ENCODE measurements at regions of chr3 and their contacts with region 1.

Region 1: GRCh38 chr3:157136647-157137387 is 23.1 kb downstream of the CCNL1 start:
- DNase-seq: peak; percentile 82
- ATAC-seq: peak; percentile 82
- H3K4me3 ChIP-seq: peak overlapping the region; percentile 3 to 43 (median 43); a peak in 2 of 6 replicates
- H3K27ac ChIP-seq: peak overlapping the region; percentile 89
- H3K4me1 ChIP-seq: peaks cover 56% of the 10 kb centered on the region
- H3K27me3 ChIP-seq: no peaks in the 10 kb centered on the region
- CTCF ChIP-seq: peak; percentile 44
- EP300 ChIP-seq: peak in 1 of 2 experiments; percentile 82; a peak in 2 of 4 replicates
- POLR2A ChIP-seq: peak; percentile 64 to 66
- RAD21 ChIP-seq: no peak

Region 2: DNA sequence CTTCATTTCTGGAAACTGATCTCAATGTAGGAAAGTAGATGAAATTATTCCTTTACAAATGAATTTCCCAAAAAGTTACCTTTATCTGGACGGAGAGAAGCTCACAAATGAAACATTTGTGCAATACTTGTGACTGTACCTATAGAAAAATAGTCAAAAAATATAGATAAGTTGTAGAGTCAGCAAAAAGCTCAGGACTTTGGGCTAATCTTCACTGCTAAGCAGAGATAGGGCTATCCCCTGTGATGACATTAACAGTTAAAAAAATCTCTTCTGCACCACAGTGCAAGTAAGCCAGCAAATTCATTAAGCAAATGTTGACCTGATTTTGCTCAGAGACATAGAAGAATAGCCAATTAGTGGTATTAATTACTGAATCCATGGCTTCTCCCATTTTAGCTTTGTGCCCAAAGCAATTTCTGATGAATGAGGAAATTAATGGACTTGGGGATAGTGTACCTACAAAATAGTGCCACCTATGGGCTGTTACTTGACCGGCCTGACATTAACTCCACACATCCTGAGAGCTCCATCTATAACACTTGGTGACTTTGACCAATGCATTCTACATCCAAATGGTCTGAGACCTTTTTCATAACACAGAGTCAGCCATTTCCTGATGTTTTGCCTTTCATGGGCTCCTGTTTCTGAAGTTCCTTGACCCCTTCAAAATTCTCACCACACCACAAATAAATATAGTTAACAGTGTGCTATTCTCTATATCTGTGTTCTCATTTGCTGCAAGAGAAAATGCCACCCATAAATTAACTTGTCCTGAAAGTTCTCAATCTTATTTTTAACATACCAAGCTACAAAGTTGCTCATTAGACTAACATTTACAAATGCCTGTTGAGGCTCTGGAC is 686.9 kb before region 1 on chr3:
- CTCF ChIA-PET with region 1: no interaction called
- POLR2A ChIA-PET with region 1: no interaction called
- in situ Hi-C with region 1: no loop called
- intact Hi-C with region 1: loop called (anchors 5 kb)
- DNase-seq: peak; percentile 29
- ATAC-seq: peak; percentile 87
- H3K4me3 ChIP-seq: no peak overlapping the region
- H3K27ac ChIP-seq: no peak overlapping the region
- H3K4me1 ChIP-seq: no peaks in the 10 kb centered on the region
- H3K27me3 ChIP-seq: no peaks in the 10 kb centered on the region; a peak in 1 of 5 replicates
- CTCF ChIP-seq: peak; percentile 53
- EP300 ChIP-seq: no peak
- POLR2A ChIP-seq: no peak
- RAD21 ChIP-seq: no peak

Region 3: DNA sequence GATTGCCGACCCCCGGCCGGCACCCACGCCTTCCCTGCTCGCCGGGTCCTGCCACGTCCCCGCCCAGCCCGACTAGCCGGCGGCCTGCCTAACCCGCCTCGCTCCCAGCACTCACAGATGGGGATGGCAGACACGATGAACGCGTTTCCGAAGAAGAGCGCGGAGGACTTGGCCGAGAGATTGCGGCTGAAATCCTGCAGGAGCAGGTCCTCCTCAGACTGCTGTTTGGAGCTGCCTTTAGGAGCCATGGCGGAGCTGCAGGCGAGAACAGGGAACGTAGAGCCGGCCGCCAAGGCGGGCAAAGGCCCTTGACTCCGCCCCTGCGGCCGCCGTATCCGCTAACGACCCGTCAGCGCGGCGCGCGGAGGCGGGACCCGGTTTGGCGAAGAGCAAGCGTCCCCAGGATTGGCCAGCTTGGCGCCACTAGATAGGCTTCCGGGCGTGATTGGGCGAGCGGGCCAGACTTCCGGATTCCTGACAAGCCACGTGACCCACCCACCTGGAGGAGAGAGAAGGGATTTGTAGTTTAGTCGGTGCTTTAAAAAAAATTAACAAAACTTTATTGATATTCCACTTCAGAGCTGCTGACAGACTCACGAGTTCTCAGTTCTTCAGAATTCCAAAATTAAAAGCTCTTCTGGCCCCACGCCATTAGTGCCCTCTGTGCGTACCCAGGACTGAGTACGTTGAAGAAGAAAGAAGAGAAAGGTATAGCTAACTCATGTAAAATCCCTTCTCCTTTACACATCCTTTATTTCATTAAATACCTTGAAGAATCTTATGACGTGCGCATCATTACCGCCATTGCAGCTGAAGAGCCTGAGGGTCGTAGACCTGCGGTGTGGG is 581.8 kb before region 1 on chr3 and contains the start of gene SSR3:
- CTCF ChIA-PET with region 1: no interaction called
- POLR2A ChIA-PET with region 1: interaction called, 15 read pairs
- in situ Hi-C with region 1: no loop called
- intact Hi-C with region 1: loop called (anchors 1 kb)
- DNase-seq: peak; percentile 96
- ATAC-seq: peak; percentile 99
- H3K4me3 ChIP-seq: peak within 1 kb of the TSS; percentile 85 to 100 (median 91)
- H3K27ac ChIP-seq: peak within 1 kb of the TSS; percentile 94
- H3K4me1 ChIP-seq: peaks cover 38% of the 10 kb centered on the region
- H3K27me3 ChIP-seq: no peaks in the 10 kb centered on the region; a peak in 2 of 5 replicates
- CTCF ChIP-seq: no peak
- EP300 ChIP-seq: peak in 1 of 2 experiments; percentile 35; a peak in 2 of 4 replicates
- POLR2A ChIP-seq: peak; percentile 88 to 98
- RAD21 ChIP-seq: no peak; the same call in 1 of the 2 replicates
- total RNA-seq, gene SSR3: 268 and 325 TPM in 2 replicates

Region 4: DNA sequence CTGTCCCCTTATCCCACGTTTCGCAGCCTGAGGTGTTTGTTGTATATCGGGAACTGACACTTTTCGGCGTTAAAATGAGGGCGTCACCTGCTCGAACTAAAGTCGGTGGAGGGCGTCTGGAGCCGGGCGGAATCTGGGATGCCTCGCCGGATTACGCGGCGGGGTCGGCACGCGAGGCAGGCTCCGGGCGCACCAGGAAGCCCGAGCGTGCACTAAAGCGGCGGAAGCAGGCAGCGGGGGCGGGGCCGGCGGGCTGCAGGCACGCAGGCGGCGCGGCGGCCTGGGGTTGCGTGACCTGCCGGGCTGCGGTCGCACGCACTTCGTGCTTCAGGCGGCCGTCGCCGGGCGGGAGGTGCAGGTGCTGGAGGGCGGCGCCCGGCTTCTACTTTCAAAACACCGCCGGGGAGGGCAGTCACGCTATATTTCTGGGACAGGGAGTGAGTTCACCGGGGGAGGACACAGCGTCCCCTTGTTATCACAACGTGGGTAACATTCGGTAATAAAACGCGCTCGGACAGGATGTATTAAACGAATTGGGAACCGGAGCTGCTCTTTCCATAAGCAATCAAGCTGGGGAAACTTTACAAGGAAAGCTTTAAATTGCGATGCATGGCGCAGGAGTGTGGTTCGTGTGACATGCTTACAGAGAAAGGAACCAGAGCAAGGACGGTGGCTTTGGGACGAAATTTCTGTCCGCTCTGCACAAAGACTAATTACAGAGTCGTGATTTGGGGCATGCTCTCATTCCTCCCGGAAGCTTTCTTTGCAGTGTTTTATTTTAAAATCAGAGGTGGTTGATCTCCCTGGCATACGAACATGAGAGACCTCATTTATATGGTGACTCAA is 319.8 kb before region 1 on chr3:
- CTCF ChIA-PET with region 1: no interaction called
- POLR2A ChIA-PET with region 1: no interaction called
- in situ Hi-C with region 1: no loop called
- intact Hi-C with region 1: loop called (anchors 5 kb)
- DNase-seq: no peak
- ATAC-seq: peak; percentile 34
- H3K4me3 ChIP-seq: peak overlapping the region in 1 of 3 experiments; percentile 17; a peak in 1 of 6 replicates
- H3K27ac ChIP-seq: no peak overlapping the region
- H3K4me1 ChIP-seq: peaks cover 24% of the 10 kb centered on the region
- H3K27me3 ChIP-seq: no peaks in the 10 kb centered on the region
- CTCF ChIP-seq: no peak
- EP300 ChIP-seq: no peak
- POLR2A ChIP-seq: no peak
- RAD21 ChIP-seq: no peak

Region 5: DNA sequence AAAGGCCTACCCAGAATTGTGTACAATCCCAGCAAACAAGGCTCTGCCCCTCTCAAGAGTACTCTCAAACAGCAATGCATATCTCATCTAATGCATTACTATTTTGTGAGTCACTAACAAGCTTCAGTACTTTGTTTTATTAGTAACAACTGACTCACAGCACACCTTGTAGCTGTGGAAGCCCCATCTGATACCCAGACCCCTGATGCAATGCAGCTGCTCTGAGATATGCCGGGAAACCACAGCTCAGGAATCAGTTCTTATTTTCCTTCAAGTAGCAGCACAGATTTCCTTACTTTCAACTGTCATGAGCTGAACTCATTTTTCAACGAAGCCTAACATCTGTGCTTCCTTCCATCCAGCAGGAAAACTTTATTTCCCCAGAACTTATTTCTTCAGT is 14.7 kb before region 1 on chr3:
- CTCF ChIA-PET with region 1: no interaction called
- POLR2A ChIA-PET with region 1: interaction called, 53 read pairs
- in situ Hi-C with region 1: no loop called
- intact Hi-C with region 1: no loop called
- DNase-seq: peak; percentile 43
- ATAC-seq: no peak
- H3K4me3 ChIP-seq: no peak overlapping the region
- H3K27ac ChIP-seq: peak overlapping the region; percentile 23
- H3K4me1 ChIP-seq: peaks cover 86% of the 10 kb centered on the region
- H3K27me3 ChIP-seq: no peaks in the 10 kb centered on the region
- CTCF ChIP-seq: no peak
- EP300 ChIP-seq: peak in 1 of 2 experiments; percentile 40; a peak in 1 of 4 replicates
- POLR2A ChIP-seq: no peak
- RAD21 ChIP-seq: no peak

Region 6: GRCh38 chr3:157174649-157175498 is 38.1 kb after region 1 on chr3:
- CTCF ChIA-PET with region 1: no interaction called
- POLR2A ChIA-PET with region 1: interaction called, 13 read pairs
- in situ Hi-C with region 1: no loop called
- intact Hi-C with region 1: no loop called
- DNase-seq: peak; percentile 98
- ATAC-seq: peak; percentile 95
- H3K4me3 ChIP-seq: peak overlapping the region; percentile 74 to 88 (median 74)
- H3K27ac ChIP-seq: peak overlapping the region; percentile 88
- H3K4me1 ChIP-seq: peaks cover 35% of the 10 kb centered on the region
- H3K27me3 ChIP-seq: no peaks in the 10 kb centered on the region; a peak in 1 of 5 replicates
- CTCF ChIP-seq: no peak; the same call in 1 of the 2 replicates
- EP300 ChIP-seq: peak; percentile 24 to 56; a peak in 3 of 4 replicates
- POLR2A ChIP-seq: peak; percentile 92 to 93
- RAD21 ChIP-seq: peak; percentile 37; the same call in 1 of the 2 replicates

Region 7: GRCh38 chr3:157387708-157388435 is 251.1 kb after region 1 on chr3:
- CTCF ChIA-PET with region 1: no interaction called
- POLR2A ChIA-PET with region 1: no interaction called
- in situ Hi-C with region 1: no loop called
- intact Hi-C with region 1: no loop called
- DNase-seq: no peak
- ATAC-seq: no peak
- H3K4me3 ChIP-seq: no peak overlapping the region
- H3K27ac ChIP-seq: no peak overlapping the region
- H3K4me1 ChIP-seq: no peaks in the 10 kb centered on the region
- H3K27me3 ChIP-seq: no peaks in the 10 kb centered on the region; a peak in 1 of 5 replicates
- CTCF ChIP-seq: no peak
- EP300 ChIP-seq: no peak
- POLR2A ChIP-seq: no peak
- RAD21 ChIP-seq: no peak

Measured in HepG2 (cell line).